IMR-90 (cell line): ENCODE measurements at regions of chr1 and their contacts with region 1.

Region 1: GRCh38 chr1:113949007-113949406 is 19.9 kb downstream of the HIPK1 start:
- DNase-seq: no peak
- ATAC-seq: no peak
- H3K4me3 ChIP-seq: no peak overlapping the region
- H3K27ac ChIP-seq: no peak overlapping the region
- H3K4me1 ChIP-seq: peaks cover 7% of the 10 kb centered on the region
- H3K27me3 ChIP-seq: no peaks in the 10 kb centered on the region
- CTCF ChIP-seq: peak; percentile 40
- POLR2A ChIP-seq: no peak
- RAD21 ChIP-seq: peak; percentile 22; the same call in 1 of the 2 replicates

Region 2: GRCh38 chr1:113835642-113836307 is 113.2 kb before region 1 on chr1:
- CTCF ChIA-PET with region 1: no interaction called
- POLR2A ChIA-PET with region 1: no interaction called
- dilution Hi-C with region 1: no loop called
- in situ Hi-C with region 1: no loop called
- intact Hi-C with region 1: loop called (anchors 5 kb)
- DNase-seq: peak; percentile 61
- ATAC-seq: peak; percentile 56
- H3K4me3 ChIP-seq: no peak overlapping the region
- H3K27ac ChIP-seq: no peak overlapping the region
- H3K4me1 ChIP-seq: no peaks in the 10 kb centered on the region
- H3K27me3 ChIP-seq: no peaks in the 10 kb centered on the region
- CTCF ChIP-seq: peak; percentile 65
- POLR2A ChIP-seq: no peak
- RAD21 ChIP-seq: peak; percentile 67